Lower leg skin (tissue), 4 donors: ENCODE measurements at regions of chr11 and their contacts with region 1.

Region 1: DNA sequence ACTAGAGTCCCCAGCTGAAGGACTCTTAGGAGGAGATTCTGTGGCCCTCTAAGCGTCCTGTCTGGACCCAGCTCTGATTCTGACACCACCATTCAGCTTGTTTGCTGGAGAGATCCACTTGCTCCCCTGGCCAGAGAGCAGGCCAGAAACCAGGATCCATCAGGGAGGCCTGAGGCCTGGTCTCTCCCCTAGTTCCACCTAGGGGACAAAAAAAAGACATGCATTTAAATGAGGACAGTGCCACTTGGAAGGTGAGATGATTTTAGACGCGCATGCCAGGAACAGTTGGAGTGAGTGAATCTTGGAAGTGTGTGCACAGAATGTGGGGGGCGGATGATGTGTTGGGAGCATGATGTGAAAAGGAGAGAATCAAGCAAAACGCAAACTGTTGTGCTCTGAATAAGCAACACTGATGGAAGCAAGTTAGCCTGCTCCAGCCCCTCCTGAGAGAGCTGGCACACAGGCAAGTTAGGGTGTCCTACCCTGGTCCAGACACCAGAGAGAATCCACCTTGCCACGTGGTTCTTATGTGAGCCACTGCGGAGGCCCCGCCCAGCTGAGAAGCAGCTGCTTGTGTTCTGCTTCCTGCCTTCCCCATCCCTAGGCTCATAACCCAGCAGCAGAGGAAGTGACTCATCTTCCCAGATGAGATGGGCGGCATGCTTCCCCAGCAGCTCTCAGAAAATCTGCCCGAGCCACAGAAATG is 8.0 kb upstream of the SLCO2B1 start:
- DNase-seq: peak; percentile 76 to 93
- H3K4me3 ChIP-seq: no peak overlapping the region
- CTCF ChIP-seq: no peak
- POLR2A ChIP-seq: no peak

Region 2: DNA sequence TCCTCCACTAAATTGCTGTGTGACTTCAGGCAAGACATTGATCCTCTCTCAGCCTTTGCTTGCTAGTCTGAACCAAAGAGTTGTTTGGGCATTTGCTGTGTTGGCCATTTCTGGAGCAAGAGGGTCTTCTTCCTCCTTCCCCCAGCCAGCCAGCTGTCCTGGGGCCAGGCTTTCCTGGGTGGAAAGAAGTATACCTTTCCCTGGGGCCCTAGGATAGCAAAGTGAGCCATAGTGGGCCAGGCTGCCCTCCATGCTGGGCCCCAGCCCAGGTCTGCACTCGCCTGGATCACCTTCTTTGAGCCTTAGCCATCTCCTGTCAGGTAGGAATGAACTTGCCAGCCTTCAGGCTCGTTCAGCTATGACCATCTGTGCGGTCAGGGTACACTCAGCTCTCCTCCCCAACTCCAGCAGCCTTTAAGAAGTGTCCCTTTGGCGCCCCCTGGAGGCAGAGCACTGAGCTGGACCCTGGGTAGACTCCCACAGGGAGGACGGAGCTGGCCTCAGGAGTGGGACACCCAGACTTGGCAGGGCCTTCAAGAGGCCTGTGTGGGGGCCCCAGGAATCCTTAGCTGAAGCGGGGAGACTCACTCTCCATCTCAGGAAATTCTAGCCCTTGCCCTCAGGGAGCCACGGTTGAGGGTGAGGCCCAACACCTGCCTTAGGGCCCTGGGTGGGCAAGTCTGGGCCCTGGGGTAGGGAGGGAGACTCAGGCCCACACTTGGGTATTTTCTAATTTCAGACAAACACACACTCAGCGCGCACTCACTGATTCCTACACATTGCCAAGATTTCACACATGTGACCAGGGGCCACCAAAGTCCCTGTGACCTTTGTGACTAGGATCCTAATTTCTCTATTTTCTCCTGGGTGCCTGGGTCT is 62.1 kb after region 1 on chr11:
- intact Hi-C with region 1: loop called (anchors 5 kb)
- DNase-seq: peak; percentile 74 to 96
- H3K4me3 ChIP-seq: no peak overlapping the region
- CTCF ChIP-seq: peak in 1 of 3 donors; percentile 72
- POLR2A ChIP-seq: no peak

Region 3: GRCh38 chr11:75248690-75249268 is 105.9 kb after region 1 on chr11:
- intact Hi-C with region 1: loop called (anchors 5 kb)
- DNase-seq: peak; percentile 88 to 97
- H3K4me3 ChIP-seq: no peak overlapping the region
- CTCF ChIP-seq: peak in 2 of 3 donors; percentile 16 to 97
- POLR2A ChIP-seq: no peak